Activated CD4-positive, alpha-beta T cell treated with anti-CD3 and anti-CD28 coated beads for 36 hours (primary cell): ENCODE measurements at regions of chr19 and their contacts with region 1.

Region 1: DNA sequence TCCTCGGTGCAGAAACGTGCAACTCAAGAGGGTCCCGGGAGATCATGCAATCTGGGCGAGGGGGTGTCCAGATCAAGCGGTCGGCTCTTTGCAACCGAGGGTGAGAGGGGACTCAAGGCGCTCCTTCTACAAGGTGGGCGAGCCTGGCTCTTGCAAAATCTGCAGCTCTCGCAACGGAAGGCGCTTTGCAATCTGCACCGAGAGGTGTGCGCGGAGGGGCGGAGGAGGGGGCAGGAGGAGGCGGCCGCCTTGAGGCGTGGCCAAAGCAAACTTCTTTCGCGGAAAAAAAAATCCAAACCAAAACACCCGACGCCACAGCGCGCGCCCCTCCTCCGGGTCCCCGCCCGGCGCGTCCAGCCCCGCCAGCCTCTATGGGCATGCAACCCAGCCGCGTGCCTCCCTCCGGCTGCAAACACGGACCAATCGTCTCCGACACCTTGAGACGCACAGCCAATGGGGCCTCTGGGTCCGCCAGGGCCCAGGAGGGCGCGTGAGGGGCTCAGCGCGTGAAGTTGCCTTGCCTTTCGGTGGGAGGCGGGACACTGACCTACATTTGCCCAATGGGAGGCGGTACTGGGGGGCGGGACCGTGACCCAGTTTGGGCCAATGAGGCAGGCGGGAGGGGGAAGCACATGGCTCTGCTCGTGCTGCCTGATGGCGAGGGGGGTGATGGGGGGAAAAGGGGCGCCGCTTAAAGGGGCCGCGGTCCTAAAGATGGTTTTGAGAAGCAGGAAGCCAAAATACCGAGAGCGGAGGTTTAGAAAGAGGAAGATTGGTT is at the start of gene DBP:
- DNase-seq: peak; percentile 98
- ATAC-seq: peak; percentile 75
- H3K4me3 Mint-ChIP-seq: peak within 1 kb of the TSS; percentile 83
- H3K27ac Mint-ChIP-seq: peak within 1 kb of the TSS; percentile 99
- H3K4me1 Mint-ChIP-seq: peaks cover 55% of the 10 kb centered on the region
- H3K27me3 Mint-ChIP-seq: no peaks in the 10 kb centered on the region
- total RNA-seq, gene DBP: 8.3 to 12.4 TPM

Region 2: DNA sequence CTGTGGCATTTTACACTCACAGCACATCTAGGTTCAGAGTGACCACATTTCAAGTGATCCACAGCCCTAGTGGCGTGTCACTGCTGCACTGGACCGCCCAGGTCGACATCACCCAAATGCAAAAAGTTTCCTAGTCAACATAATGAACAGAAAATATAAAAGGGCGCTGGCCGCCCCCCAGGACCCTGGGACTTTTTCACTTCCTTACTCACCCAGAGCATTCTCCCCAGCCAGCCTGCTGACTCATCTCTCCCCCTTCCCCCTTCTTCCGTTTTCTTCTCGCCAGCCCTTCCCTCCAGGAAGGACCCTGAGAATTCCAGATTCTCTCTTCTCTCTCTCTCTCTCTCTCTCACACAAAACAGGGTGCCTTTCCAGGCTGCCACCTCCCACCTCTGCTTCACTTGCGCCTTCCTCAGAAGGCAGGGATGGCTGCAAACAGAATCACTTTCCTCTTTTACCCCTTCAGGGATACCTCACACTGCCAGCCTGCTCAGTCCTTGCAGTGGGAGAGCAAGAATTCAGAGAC is 212.6 kb before region 1 on chr19:
- CTCF ChIA-PET with region 1: no interaction called
- POLR2A ChIA-PET with region 1: no interaction called
- intact Hi-C with region 1: no loop called
- DNase-seq: peak; percentile 17
- ATAC-seq: peak; percentile 26
- H3K4me3 Mint-ChIP-seq: no peak overlapping the region
- H3K27ac Mint-ChIP-seq: no peak overlapping the region
- H3K4me1 Mint-ChIP-seq: peaks cover 5% of the 10 kb centered on the region
- H3K27me3 Mint-ChIP-seq: peaks cover 2% of the 10 kb centered on the region

Region 3: DNA sequence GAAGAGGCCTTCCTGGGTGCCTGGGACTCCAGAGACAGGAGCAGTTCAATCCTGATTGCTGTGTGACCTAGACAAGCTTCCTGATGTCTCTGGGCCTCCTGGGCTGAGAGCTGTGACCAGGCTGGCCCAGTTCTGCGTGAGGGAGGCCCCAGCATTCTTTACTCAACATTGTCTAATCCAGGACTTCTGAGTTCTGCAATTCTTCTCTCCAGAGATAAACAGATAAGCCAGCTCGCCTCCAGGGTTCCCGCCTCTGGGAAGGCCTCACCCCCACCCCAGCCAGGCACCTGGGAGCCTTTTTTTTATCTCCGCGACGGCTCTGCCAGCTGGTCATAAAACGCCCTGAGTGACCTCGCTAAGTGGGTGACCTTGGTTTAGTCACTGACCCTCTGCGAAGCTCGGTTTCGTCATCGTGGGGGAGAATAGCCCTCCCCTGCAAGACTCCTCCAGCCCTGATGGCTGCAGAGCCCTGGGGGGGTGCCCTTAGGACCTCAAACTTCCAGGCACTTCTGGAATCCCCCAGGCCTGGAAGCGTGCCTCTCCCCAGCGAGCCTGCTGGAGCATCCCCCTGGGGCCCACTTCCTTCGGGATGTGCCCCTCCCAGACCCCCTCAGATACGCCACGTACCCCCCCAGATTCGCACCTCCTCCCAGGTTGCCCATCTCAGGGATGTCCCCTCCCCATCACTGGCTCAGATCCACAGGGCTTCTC is 83.5 kb before region 1 on chr19:
- CTCF ChIA-PET with region 1: no interaction called
- POLR2A ChIA-PET with region 1: no interaction called
- intact Hi-C with region 1: no loop called
- DNase-seq: no peak
- ATAC-seq: no peak
- H3K4me3 Mint-ChIP-seq: no peak overlapping the region
- H3K27ac Mint-ChIP-seq: no peak overlapping the region
- H3K4me1 Mint-ChIP-seq: no peaks in the 10 kb centered on the region
- H3K27me3 Mint-ChIP-seq: peaks cover 6% of the 10 kb centered on the region

Region 4: GRCh38 chr19:48618916-48619691 is 18.3 kb before region 1 on chr19 and contains the starts of genes RPL18 and SPHK2:
- CTCF ChIA-PET with region 1: interaction called, 4 read pairs
- POLR2A ChIA-PET with region 1: interaction called, 6 read pairs
- intact Hi-C with region 1: loop called (anchors 1 kb)
- DNase-seq: peak; percentile 97
- ATAC-seq: peak; percentile 82
- H3K4me3 Mint-ChIP-seq: peak within 1 kb of the TSS; percentile 94
- H3K27ac Mint-ChIP-seq: peak within 1 kb of the TSS; percentile 97
- H3K4me1 Mint-ChIP-seq: peaks cover 48% of the 10 kb centered on the region
- H3K27me3 Mint-ChIP-seq: no peaks in the 10 kb centered on the region
- total RNA-seq, gene RPL18: 2,026 to 2,191 TPM
- total RNA-seq, gene SPHK2: 27.0 TPM

Region 5: GRCh38 chr19:48624067-48624594 is 13.2 kb before region 1 on chr19:
- CTCF ChIA-PET with region 1: interaction called, 4 read pairs
- POLR2A ChIA-PET with region 1: interaction called, 6 read pairs
- intact Hi-C with region 1: loop called (anchors 1 kb)
- DNase-seq: peak; percentile 99
- ATAC-seq: peak; percentile 84
- H3K4me3 Mint-ChIP-seq: peak overlapping the region; percentile 73
- H3K27ac Mint-ChIP-seq: peak overlapping the region; percentile 99
- H3K4me1 Mint-ChIP-seq: peaks cover 45% of the 10 kb centered on the region
- H3K27me3 Mint-ChIP-seq: no peaks in the 10 kb centered on the region

Region 6: GRCh38 chr19:48654299-48655059 is 17.1 kb after region 1 on chr19:
- CTCF ChIA-PET with region 1: no interaction called
- POLR2A ChIA-PET with region 1: no interaction called
- intact Hi-C with region 1: no loop called
- DNase-seq: no peak
- ATAC-seq: no peak
- H3K4me3 Mint-ChIP-seq: no peak overlapping the region
- H3K27ac Mint-ChIP-seq: no peak overlapping the region
- H3K4me1 Mint-ChIP-seq: peaks cover 16% of the 10 kb centered on the region
- H3K27me3 Mint-ChIP-seq: no peaks in the 10 kb centered on the region

Region 7: DNA sequence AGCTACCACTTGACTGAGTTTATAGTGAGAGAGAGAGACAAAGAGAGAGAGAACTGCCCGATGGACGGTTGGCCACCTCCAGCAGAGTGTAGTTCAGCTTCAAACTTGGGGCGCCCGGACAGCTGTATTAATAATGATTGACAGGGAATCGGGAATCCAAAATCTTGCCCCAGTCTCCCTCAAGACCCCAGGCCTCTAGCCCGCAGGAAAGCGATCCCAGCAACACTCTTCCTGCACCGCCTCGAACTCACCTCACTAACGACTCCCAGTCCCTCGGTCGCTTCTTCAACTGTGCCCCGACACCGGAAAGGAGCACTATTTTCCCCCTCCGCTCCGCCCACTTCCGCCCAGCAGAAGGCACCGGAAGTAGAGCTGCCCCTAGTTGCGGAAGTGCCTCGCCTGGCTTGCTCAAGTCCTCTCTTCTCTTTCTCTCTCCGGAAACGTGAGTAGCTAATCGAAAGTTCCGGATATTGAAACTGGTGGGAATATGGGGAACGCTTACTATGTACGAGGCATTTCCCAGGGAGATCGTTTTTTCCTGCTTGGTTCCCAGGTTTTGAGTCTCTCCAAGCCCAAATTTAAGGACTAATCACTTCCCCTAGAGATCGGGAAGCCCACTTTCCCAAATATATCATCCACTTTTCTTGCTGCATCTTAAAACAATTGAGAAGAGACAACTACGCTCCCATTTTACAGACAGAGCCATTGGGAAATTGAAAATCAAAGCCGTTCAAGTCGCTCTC is 943.1 kb after region 1 on chr19 and contains the start of gene NOSIP:
- CTCF ChIA-PET with region 1: no interaction called
- POLR2A ChIA-PET with region 1: no interaction called
- intact Hi-C with region 1: loop called in 1 of 2 experiments (anchors 10 kb)
- DNase-seq: peak; percentile 98
- ATAC-seq: peak; percentile 97
- H3K4me3 Mint-ChIP-seq: peak within 1 kb of the TSS; percentile 92
- H3K27ac Mint-ChIP-seq: peak within 1 kb of the TSS; percentile 89
- H3K4me1 Mint-ChIP-seq: peaks cover 34% of the 10 kb centered on the region
- H3K27me3 Mint-ChIP-seq: no peaks in the 10 kb centered on the region
- total RNA-seq, gene NOSIP: 71.4 to 73.1 TPM